Pancreas (tissue), 10 donors: ENCODE measurements at regions of chr16 and their contacts with region 1.

Region 1: GRCh38 chr16:1054660-1055556 is 17.6 kb upstream of the SSTR5 start:
- DNase-seq: peak in 4 of 6 donors; percentile 44 to 90 (median 73)
- ATAC-seq: peak; percentile 73 to 93 (median 88)
- H3K4me3 ChIP-seq: no peak overlapping the region
- H3K27ac ChIP-seq: no peak overlapping the region
- H3K4me1 ChIP-seq: no peaks in the 10 kb centered on the region
- H3K27me3 ChIP-seq: no peaks in the 10 kb centered on the region
- CTCF ChIP-seq: peak; percentile 59 to 81 (median 72)

Region 2: DNA sequence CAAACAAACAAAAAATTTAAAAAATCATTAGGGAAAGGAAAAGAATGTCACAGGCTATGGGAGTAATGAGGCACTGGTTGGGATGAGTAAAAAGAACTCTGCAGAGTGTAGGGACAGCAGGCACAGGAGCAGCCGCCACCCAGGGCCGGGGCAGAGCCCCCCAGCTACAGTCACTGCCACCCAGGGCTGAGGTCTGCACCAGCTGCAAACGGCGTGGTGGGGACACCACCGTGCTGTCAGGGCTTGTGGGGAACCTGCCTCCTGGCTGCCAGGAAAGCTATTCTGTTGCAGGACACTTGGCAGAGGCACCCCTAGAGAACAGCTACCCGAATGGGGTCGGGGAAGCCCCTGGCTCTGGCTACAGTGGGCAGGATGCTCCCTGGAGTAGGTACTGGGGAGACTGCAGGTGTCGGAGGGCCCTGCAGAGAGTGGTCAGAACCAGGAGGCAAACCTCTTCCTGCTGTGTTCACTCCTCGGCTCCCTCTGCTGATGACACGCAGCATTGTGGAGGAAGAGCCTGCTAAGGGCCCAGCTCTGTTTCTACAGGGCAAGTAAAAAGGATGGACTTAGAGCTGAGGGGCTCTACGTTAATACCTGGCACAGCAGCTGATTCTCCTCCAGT is 559.7 kb before region 1 on chr16:
- intact Hi-C with region 1: no loop called
- DNase-seq: no peak
- ATAC-seq: peak in 3 of 4 donors; percentile 66 to 79 (median 78)
- H3K4me3 ChIP-seq: no peak overlapping the region
- H3K27ac ChIP-seq: no peak overlapping the region
- H3K4me1 ChIP-seq: no peaks in the 10 kb centered on the region
- H3K27me3 ChIP-seq: no peaks in the 10 kb centered on the region
- CTCF ChIP-seq: no peak

Region 3: DNA sequence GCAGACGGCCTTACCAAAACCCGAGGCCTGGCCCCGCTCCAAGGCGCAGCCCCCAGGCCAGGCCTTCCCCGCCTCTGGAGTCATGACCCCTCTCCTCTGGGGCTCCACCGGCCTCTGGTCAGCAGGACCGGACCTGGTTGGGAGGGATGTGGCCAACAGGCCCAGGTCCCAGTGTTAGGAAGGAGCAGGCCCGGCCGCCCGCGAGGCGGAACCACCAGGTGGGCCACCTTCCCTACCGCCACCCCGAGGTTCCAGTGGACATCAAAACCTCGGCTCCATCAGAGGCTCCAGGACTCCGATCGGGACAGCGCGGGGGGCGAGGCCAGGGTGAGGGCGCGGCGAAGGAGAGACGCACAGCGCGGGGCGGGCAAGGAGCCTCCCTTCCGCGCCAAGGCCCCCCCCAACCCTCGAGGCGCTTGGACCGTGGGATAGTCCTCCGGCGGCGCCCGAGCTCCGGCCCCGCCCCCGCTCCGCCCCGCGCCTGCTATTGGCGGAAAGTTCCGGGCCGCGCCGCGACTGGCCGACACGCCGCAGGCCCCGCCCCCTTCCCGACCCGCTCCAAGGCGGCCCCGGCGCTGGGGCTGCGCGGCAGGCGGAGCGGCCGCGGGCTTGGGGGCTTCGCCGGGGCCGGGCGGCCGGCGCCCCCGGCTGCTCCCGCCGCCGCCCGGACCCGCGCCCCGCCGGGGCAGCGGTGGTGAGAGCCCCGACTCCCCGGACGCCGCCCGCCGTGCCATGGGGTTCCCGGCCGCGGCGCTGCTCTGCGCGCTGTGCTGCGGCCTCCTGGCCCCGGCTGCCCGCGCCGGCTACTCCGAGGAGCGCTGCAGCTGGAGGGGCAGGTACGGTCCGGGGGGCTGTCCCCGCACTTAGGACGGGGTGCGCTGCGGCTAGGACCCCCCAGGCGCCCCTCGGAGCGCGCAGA is 340.1 kb before region 1 on chr16 and contains the start of gene METRN:
- intact Hi-C with region 1: loop called in 2 of 3 experiments (anchors 5 to 10 kb)
- DNase-seq: peak; percentile 87 to 98 (median 94)
- ATAC-seq: peak; percentile 78 to 91 (median 86)
- H3K4me3 ChIP-seq: peak within 1 kb of the TSS; percentile 56 to 89 (median 68)
- H3K27ac ChIP-seq: peak within 1 kb of the TSS; percentile 36 to 60 (median 50)
- H3K4me1 ChIP-seq: peaks cover 3 to 17% (median 14%) of the 10 kb centered on the region in 3 donors
- H3K27me3 ChIP-seq: peaks cover 0 to 10% (median 0%) of the 10 kb centered on the region in 4 donors
- CTCF ChIP-seq: no peak
- total RNA-seq, gene METRN: 27.6 to 44.9 (median 37.7) TPM

Region 4: DNA sequence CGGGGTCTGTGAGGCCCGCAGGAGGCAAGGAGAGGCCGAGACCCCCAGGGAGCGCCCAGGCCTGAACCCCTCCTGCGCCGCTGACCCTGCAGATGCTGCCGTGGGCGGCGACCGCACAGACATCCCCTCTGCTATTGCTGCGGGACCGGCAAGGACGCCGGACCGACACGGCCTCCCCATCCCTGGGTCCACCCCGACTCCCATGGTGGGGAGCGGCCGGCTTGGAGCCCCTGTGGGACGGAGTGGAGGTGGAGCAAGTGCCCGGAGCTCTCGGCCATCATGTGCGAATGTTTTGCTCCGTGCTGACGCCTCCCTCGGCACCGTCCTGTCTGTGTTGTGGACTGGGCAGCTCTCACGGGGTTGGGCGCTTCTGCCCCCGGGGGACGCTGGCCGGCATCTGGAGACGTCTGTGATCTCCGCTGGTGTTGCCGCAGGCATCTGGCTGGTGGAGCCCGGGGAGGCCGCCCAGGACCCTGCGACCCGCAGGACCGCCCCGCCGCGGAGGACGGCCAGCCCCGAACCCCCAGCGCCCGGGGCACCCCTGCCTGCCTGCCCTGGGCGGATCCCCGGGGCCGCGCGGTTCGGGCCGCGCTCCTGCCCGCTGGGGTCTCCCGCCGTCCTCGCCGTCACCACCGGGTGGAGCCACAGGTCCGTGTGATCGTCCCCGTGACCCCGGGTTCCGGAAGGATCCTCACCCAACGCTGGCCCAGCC is 241.5 kb before region 1 on chr16:
- intact Hi-C with region 1: loop called in 2 of 3 experiments (anchors 2 to 5 kb)
- DNase-seq: peak in 2 of 6 donors; percentile 73 to 74
- ATAC-seq: peak; percentile 46 to 88 (median 75)
- H3K4me3 ChIP-seq: peak overlapping the region in 1 of 4 donors; percentile 15
- H3K27ac ChIP-seq: no peak overlapping the region
- H3K4me1 ChIP-seq: peaks cover 0 to 2% (median 0%) of the 10 kb centered on the region in 3 donors
- H3K27me3 ChIP-seq: peaks cover 0 to 22% (median 2%) of the 10 kb centered on the region in 4 donors
- CTCF ChIP-seq: peak in 3 of 4 donors; percentile 44 to 48 (median 45)